ENCODE measurements at regions of chr3 and their contacts with region 1.

Region 1: DNA sequence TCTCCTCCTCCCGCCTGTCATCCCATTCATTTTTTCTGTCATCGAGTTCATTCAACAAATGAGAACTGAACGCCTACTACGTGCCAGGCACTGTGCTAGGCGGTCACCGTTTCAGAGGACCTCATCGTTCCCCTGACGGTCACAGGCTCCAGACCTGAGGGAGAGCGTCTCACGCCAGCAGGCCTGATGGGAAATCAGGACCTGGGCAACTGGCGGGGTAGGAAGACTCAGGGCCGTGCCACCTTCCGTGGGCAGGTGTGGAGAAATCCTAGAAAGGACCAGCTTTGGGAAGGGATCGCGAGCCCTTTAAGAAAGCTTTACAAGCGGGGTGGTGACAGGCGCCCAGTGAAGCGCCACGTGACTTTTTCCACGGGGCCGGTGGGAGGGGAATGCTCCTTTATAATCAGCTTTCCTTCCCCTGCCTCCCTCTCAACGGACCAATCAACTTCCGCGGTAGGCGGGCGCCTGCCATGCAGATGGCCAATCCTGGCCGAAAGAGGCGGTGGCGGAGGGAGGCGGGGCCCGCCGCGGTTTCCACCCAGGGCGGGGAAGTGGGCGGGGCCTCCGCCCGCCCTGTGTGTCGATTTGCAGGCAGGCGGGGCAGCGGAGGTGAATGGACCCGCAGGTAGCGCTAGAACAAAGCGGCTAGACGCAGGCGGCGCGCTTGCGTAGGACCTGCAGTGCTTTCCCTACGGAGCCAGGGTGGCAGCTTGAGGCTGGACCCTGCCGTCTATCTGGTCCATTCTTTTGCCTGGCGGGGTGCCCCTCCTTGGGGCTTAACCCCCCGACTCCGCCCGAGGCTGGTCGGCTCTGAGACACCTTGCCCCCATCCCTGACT is 816 bp upstream of the DUSP7 start:
- DNase-seq: peak; percentile 98 to 99 (median 99)
- H3K4me3 ChIP-seq: peak overlapping the region; percentile 59 to 98 (median 84)
- H3K27ac ChIP-seq: peak overlapping the region; percentile 50 to 78
- H3K4me1 ChIP-seq: peaks cover 2 to 48% (median 46%) of the 10 kb centered on the region in 4 experiments
- H3K27me3 ChIP-seq: no peaks in the 10 kb centered on the region

Region 2: GRCh38 chr3:51955893-51956770 is 101.1 kb before region 1 on chr3:
- CTCF ChIA-PET with region 1: no interaction called
- POLR2A ChIA-PET with region 1: no interaction called
- DNase-seq: peak; percentile 77 to 82 (median 78)
- H3K4me3 ChIP-seq: peak overlapping the region; percentile 19 to 69 (median 56)
- H3K27ac ChIP-seq: no peak overlapping the region
- H3K4me1 ChIP-seq: peaks cover 0 to 24% (median 19%) of the 10 kb centered on the region in 4 experiments
- H3K27me3 ChIP-seq: peaks cover 0 to 30% (median 24%) of the 10 kb centered on the region in 5 experiments

Region 3: GRCh38 chr3:52001443-52001974 is 55.7 kb before region 1 on chr3:
- CTCF ChIA-PET with region 1: interaction called, 50 read pairs
- POLR2A ChIA-PET with region 1: interaction called, 4 read pairs
- DNase-seq: peak; percentile 83 to 91 (median 88)
- H3K4me3 ChIP-seq: peak overlapping the region in 2 of 7 experiments; percentile 11 to 25
- H3K27ac ChIP-seq: no peak overlapping the region
- H3K4me1 ChIP-seq: peaks cover 0 to 32% (median 19%) of the 10 kb centered on the region in 4 experiments
- H3K27me3 ChIP-seq: no peaks in the 10 kb centered on the region

Region 4: GRCh38 chr3:52014613-52015012 is 42.6 kb before region 1 on chr3:
- CTCF ChIA-PET with region 1: interaction called, 12 read pairs
- POLR2A ChIA-PET with region 1: no interaction called
- DNase-seq: peak in 2 of 3 donors; percentile 18 to 33
- H3K4me3 ChIP-seq: no peak overlapping the region
- H3K27ac ChIP-seq: no peak overlapping the region
- H3K4me1 ChIP-seq: peaks cover 0 to 16% (median 6%) of the 10 kb centered on the region in 4 experiments
- H3K27me3 ChIP-seq: no peaks in the 10 kb centered on the region

Region 5: DNA sequence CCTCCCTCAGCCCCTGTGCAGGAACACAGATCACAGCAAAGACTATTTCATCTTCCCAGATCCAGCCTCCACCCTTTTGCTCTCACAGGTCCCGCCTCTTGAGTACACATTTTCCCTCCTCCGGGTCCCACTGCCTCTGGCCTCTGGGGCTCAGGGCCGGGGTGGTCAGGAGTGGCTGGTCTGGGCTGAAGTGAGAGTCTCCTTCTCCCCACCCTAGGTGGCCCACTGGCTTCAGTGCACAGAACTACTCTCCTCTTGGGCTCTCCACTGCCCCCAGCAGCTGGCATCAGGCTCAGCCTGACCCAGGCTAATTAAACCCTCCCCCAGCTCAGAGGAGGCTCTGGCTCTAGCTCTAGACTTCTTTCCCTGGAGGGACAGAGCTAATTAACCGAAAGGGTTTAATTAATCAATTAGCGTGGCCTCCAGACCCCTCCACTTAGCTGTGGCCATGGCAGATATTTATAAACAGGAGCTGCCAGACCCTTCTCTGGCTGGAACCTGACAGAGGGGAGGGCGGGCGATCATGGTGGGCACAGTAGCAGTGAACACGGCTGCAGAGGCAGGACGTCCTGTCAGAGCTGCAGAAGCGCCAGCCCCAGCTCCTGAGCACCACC is 16.0 kb before region 1 on chr3:
- CTCF ChIA-PET with region 1: interaction called, 41 read pairs
- POLR2A ChIA-PET with region 1: interaction called, 3 read pairs
- DNase-seq: no peak
- H3K4me3 ChIP-seq: no peak overlapping the region
- H3K27ac ChIP-seq: no peak overlapping the region
- H3K4me1 ChIP-seq: peaks cover 0 to 11% (median 6%) of the 10 kb centered on the region in 4 experiments
- H3K27me3 ChIP-seq: no peaks in the 10 kb centered on the region

Region 6: DNA sequence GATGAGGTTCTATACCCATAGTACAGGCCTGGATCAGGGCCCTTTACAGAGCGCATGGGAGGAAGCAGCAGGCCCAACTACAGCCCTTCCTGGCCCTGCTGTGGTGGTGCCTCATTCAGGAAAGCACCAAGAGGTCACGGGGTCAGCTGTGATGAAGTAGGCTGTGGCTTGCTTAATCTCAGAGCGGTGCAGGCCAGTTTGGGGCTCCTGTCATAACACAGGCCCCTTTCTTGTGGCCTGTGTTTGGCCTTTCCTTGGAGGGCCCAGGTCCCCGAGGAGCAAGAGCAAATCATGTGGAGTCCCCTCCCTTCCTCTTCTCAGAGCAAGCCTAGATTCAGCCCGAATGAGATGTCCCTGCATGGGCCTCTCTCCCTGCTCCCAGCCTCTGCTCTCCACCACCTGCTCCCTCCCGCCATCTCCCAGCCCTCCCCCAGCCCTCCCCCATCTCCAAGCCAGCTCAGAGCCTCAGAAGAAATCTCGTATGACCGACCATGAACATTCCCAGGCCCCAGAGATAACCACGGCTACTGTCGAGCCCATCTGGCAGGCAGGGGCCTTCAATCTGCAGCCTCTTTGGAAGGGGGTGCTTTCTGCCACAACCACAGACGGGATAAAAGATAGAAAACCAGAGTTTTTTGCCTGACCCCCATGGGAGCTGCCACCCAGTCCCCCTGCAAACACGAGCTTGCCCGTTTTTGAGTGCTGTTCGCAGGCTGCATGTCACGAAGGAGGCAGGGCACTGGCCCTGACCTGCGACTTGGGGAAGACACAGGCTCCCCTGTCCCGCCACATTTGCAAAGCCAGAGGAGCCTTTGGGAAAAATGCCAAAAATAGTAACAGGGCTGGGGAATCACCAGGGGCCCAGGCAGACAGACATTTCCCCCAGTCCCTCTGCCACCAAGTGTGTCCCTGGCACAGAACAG is 31.5 kb after region 1 on chr3:
- CTCF ChIA-PET with region 1: interaction called, 46 read pairs
- POLR2A ChIA-PET with region 1: no interaction called
- DNase-seq: no peak
- H3K4me3 ChIP-seq: peak overlapping the region in 1 of 7 experiments; percentile 12
- H3K27ac ChIP-seq: no peak overlapping the region
- H3K4me1 ChIP-seq: peaks cover 5 to 60% (median 42%) of the 10 kb centered on the region in 4 experiments
- H3K27me3 ChIP-seq: no peaks in the 10 kb centered on the region

Region 7: DNA sequence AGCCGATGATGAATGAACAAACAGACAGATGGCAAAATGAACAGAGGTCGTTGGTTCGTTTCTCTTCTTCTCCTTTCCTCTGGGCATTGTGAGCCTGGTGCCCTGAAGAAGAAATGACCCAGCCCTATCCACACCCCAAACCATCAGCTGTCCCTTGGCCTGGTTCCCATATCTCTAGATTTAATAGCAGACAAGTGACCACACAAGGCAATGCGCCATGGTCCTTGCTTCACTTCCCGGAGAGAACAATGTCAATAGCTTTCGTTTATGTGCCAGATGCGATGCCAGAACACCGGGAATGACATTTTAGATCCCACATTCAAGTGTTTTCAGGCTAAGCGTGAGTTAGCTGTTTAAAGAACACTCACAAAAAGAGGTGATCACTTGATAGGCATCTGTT is 79.3 kb after region 1 on chr3:
- CTCF ChIA-PET with region 1: interaction called, 14 read pairs
- POLR2A ChIA-PET with region 1: interaction called, 3 read pairs
- DNase-seq: no peak
- H3K4me3 ChIP-seq: no peak overlapping the region
- H3K27ac ChIP-seq: peak overlapping the region in 1 of 2 experiments; percentile 32
- H3K4me1 ChIP-seq: peaks cover 0 to 11% (median 4%) of the 10 kb centered on the region in 4 experiments
- H3K27me3 ChIP-seq: no peaks in the 10 kb centered on the region

Region 8: DNA sequence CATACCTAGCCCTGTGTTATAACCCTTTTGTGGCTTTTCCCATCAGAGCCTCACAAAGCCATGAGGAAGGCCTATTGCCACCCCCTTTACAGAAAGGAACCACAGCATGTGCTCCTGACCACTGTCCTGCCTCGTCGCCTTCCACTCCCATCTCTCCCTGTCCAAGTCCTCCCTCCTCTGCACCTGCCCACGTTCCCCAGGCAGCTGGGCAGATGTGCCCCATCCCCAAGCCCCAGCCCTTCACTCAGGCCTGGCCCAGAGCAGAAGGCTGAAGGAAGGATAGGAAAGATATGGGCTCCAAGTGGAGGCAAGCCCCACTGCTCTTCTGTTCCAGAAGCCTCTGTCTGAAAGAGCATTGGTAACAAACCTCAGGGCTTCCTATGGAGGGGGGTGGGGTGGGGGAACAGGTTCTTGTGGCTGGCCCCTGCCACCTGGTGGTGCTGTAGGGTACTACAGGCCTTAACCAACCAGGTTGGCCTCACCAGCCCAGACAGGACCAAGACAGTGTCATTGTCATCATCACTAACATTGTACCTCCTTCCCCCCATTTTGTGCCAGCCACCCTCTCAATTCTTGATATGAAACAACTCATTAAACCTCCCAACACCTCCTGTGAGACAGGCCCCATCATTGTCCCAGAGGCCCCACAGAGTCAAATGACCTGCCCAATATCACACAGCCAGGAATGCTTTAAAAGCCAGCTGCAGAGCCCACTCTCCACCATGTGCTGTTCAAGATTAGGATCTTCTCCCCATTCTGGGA is 87.0 kb after region 1 on chr3:
- CTCF ChIA-PET with region 1: interaction called, 10 read pairs
- POLR2A ChIA-PET with region 1: no interaction called
- DNase-seq: peak; percentile 86 to 94 (median 91)
- H3K4me3 ChIP-seq: no peak overlapping the region
- H3K27ac ChIP-seq: no peak overlapping the region
- H3K4me1 ChIP-seq: peaks cover 0 to 4% (median 4%) of the 10 kb centered on the region in 4 experiments
- H3K27me3 ChIP-seq: no peaks in the 10 kb centered on the region